Psoas muscle (tissue), 8 donors: ENCODE measurements at regions of chr11 and their contacts with region 1.

Region 1: GRCh38 chr11:14422052-14422813 is 63.2 kb upstream of the RRAS2 start:
- DNase-seq: peak; percentile 92 to 96
- ATAC-seq: peak; percentile 98 to 100 (median 99)
- H3K4me3 ChIP-seq: peak overlapping the region; percentile 15
- H3K27ac ChIP-seq: peak overlapping the region; percentile 65
- H3K4me1 ChIP-seq: peaks cover 30% of the 10 kb centered on the region
- H3K27me3 ChIP-seq: no peaks in the 10 kb centered on the region
- CTCF ChIP-seq: no peak

Region 2: DNA sequence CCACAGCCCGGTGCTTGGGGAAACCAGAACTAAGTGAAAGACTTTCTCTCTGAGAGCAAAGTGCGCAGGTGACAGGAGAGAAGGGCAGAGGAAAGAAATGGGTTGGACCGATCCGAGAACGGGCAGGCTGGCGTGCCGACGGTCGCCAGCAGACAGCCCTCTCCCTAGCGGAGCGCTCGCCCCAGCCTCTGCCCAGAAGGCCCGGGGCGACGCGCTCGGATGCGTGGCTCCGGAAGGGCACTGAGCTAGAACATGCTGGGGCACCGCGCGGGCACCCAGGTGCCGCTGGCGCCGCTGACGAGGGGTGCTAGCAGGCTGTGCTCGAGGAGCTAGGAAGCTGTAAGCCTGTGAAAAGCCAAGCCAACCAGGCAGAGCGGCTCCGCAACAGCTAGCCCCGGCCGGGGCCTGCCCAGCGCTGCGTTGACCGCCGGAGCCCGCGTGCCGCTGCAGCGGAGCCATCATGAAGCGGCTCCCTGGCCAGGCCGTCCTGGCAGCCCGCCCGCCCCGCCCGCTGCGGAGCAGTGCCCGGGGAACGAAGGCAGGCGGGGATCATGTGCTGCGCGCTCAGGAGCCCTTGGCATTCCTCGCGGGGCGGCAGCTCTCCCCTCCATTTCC is 41.2 kb before region 1 on chr11:
- intact Hi-C with region 1: loop called (anchors 2 to 5 kb)
- DNase-seq: peak; percentile 82 to 88
- ATAC-seq: peak; percentile 91 to 97 (median 94)
- H3K4me3 ChIP-seq: peak overlapping the region; percentile 76
- H3K27ac ChIP-seq: peak overlapping the region; percentile 93
- H3K4me1 ChIP-seq: peaks cover 14% of the 10 kb centered on the region
- H3K27me3 ChIP-seq: no peaks in the 10 kb centered on the region
- CTCF ChIP-seq: peak; percentile 4